ENCODE measurements at regions of chr1 and their contacts with region 1.

Region 1: DNA sequence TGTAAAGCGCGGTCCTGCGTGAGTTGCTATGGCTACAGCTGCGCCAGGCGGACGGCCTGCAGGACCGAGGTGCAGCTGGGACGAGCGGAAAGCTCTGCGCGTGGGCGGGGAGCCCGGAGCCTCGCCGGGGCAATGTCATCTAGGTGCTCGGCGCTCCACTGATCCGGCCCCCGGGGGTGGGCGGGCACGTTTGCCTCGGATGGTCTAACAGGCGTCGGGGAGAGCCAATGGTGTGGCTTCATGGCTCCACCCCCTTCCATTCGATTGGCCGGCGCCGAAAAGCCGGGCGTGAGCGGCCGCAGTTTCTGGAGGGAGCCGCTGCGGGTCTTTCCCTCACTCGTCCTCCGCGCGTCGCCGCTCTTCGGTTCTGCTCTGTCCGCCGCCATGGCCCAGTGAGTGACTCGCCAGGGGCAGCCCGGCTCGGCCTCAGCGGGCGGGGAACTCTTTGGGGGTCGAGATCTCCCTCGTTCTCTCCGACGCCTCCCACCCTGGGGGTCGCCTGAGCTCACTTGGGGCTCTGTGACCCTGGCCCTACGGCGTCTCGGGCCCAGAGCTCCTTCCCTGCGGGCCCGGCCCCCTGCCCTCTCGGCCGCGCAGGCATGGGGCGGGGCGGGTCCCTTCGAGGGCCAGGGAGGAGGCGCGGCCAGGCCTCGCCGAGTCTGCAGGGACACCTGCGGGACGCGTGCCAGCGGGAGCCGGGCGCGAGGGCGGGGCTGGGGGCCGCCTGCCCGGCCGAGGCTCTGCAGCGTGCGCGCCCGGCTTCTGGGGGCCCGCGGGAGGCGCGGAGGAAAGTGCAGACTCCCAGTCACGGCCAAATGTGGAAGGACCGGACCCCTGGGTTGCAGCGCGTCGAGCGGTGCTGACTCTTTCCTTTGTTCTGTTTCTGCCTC is at the start of gene PGD:
- DNase-seq: peak; percentile 87 to 98 (median 94)
- ATAC-seq: peak; percentile 99
- H3K4me3 ChIP-seq: peak within 1 kb of the TSS; percentile 95
- H3K4me3 Mint-ChIP-seq: peak within 1 kb of the TSS; percentile 87 to 97 (median 96)
- H3K27ac ChIP-seq: peak within 1 kb of the TSS; percentile 86
- H3K27ac Mint-ChIP-seq: peak within 1 kb of the TSS; percentile 63 to 94 (median 82)
- H3K4me1 ChIP-seq: peaks cover 4 to 7% of the 10 kb centered on the region in 2 donors
- H3K4me1 Mint-ChIP-seq: peaks cover 10 to 30% (median 25%) of the 10 kb centered on the region in 7 donors
- H3K27me3 ChIP-seq: no peaks in the 10 kb centered on the region
- H3K27me3 Mint-ChIP-seq: no peaks in the 10 kb centered on the region
- total RNA-seq, gene PGD: 42.0 to 110 (median 48.5) TPM

Region 2: GRCh38 chr1:9942939-9943788 is 455.8 kb before region 1 on chr1 and contains the starts of genes LZIC and NMNAT1:
- CTCF ChIA-PET with region 1: no interaction called
- POLR2A ChIA-PET with region 1: no interaction called
- intact Hi-C with region 1: loop called in 1 of 2 experiments (anchors 1 kb)
- DNase-seq: peak; percentile 71 to 92 (median 82)
- ATAC-seq: peak; percentile 98
- H3K4me3 ChIP-seq: peak within 1 kb of the TSS; percentile 71
- H3K4me3 Mint-ChIP-seq: peak within 1 kb of the TSS; percentile 91 to 98 (median 97)
- H3K27ac ChIP-seq: peak within 1 kb of the TSS; percentile 92
- H3K27ac Mint-ChIP-seq: peak within 1 kb of the TSS; percentile 93 to 99 (median 97)
- H3K4me1 ChIP-seq: peaks cover 0 to 9% of the 10 kb centered on the region in 2 donors
- H3K4me1 Mint-ChIP-seq: peaks cover 17 to 33% (median 26%) of the 10 kb centered on the region in 7 donors
- H3K27me3 ChIP-seq: no peaks in the 10 kb centered on the region
- H3K27me3 Mint-ChIP-seq: no peaks in the 10 kb centered on the region
- total RNA-seq, gene LZIC: 18.0 to 35.1 (median 31.0) TPM
- total RNA-seq, gene NMNAT1: 2.7 to 8.3 (median 7.5) TPM

Region 3: GRCh38 chr1:10209905-10210810 is 188.8 kb before region 1 on chr1 and contains the start of gene KIF1B:
- CTCF ChIA-PET with region 1: interaction called, 3 read pairs
- POLR2A ChIA-PET with region 1: interaction called, 3 read pairs
- intact Hi-C with region 1: loop called in 1 of 2 experiments (anchors 1 kb)
- DNase-seq: peak; percentile 93 to 98 (median 95)
- ATAC-seq: peak; percentile 99
- H3K4me3 ChIP-seq: peak within 1 kb of the TSS; percentile 94
- H3K4me3 Mint-ChIP-seq: peak within 1 kb of the TSS; percentile 83 to 93 (median 90)
- H3K27ac ChIP-seq: peak within 1 kb of the TSS; percentile 75
- H3K27ac Mint-ChIP-seq: peak within 1 kb of the TSS; percentile 51 to 82 (median 67)
- H3K4me1 ChIP-seq: peaks cover 5 to 15% of the 10 kb centered on the region in 2 donors
- H3K4me1 Mint-ChIP-seq: peaks cover 14 to 37% (median 21%) of the 10 kb centered on the region in 7 donors
- H3K27me3 ChIP-seq: peaks cover 0 to 4% of the 10 kb centered on the region in 2 donors
- H3K27me3 Mint-ChIP-seq: peaks cover 0 to 8% (median 0%) of the 10 kb centered on the region in 5 donors
- total RNA-seq, gene KIF1B: 10.4 to 21.6 (median 13.4) TPM

Region 4: DNA sequence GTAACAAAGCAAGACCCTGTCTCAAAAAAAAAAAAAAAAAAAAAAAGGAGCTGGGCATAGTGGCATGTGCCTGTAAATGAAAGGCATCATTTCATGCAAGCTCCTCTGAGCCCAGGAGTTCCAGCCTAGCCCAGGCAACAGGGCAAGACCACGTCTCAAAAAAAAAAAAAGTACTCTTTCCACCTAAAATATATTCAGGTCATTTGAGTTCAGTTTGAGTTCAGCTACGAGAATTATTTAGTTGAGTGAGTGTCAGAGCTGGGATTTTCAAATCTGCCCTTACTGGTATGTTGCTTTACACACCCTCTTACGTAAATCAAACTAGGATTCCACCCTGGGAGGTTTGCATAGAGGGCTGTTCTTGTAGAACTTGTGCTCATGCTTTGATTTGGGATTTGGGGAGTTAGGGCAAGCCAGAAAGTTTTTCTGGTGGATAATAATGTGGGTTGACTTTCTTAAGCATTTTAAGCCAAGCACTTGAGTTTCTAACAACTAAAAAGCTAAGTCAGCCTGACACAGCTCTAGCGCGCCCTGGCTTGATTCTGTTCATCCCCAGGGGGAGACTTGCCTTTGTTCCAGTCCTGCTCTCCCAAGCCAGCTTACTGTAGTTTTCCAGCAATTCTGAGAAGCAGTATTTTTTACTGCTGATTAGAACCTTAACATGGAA is 11.4 kb before region 1 on chr1:
- CTCF ChIA-PET with region 1: no interaction called
- POLR2A ChIA-PET with region 1: interaction called, 3 read pairs
- intact Hi-C with region 1: loop called (anchors 1 kb)
- DNase-seq: no peak
- ATAC-seq: no peak
- H3K4me3 ChIP-seq: no peak overlapping the region
- H3K4me3 Mint-ChIP-seq: no peak overlapping the region
- H3K27ac ChIP-seq: no peak overlapping the region
- H3K27ac Mint-ChIP-seq: no peak overlapping the region
- H3K4me1 ChIP-seq: no peaks in the 10 kb centered on the region
- H3K4me1 Mint-ChIP-seq: peaks cover 5 to 12% (median 10%) of the 10 kb centered on the region in 7 donors
- H3K27me3 ChIP-seq: no peaks in the 10 kb centered on the region
- H3K27me3 Mint-ChIP-seq: no peaks in the 10 kb centered on the region

Region 5: DNA sequence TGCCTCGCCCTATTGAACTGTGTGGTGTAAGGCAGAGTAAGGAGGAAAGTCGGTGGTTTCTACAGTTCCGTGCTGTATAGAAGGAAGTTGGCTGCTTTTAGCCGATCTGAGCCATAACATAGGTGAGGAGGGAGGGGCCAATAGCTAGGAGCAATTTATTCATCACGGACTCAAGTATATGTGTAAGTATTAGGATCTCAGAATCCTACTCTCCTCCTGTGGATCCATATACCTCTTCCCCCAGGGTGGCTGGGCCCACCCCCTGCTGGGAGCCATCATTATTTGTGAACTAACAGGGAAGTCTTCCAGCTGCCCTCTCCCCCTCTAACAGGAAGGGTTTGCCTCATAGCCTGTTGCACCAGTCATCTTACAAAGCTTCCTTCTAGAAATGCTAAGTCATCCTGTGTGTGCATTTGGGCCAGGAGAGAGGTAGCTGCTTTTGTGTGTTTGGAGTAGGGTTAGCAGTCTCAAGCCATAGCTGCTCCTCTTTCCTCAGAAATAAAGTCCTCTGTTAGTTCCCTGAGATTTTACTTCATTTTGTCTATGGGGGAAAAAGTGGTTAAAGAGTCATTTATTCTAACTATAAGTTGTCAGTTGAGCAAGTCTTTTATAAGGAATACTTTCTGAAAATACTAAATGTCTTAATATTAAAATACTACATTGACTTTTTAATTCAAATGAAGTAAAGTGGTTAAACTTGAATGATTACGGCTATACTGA is 16.4 kb after region 1 on chr1:
- CTCF ChIA-PET with region 1: no interaction called
- POLR2A ChIA-PET with region 1: no interaction called
- intact Hi-C with region 1: loop called in 1 of 2 experiments (anchors 2 kb)
- DNase-seq: no peak
- ATAC-seq: peak; percentile 91
- H3K4me3 ChIP-seq: no peak overlapping the region
- H3K4me3 Mint-ChIP-seq: peak overlapping the region in 2 of 10 donors; percentile 30 to 70
- H3K27ac ChIP-seq: no peak overlapping the region
- H3K27ac Mint-ChIP-seq: peak overlapping the region in 8 of 9 donors; percentile 51 to 88 (median 74)
- H3K4me1 ChIP-seq: no peaks in the 10 kb centered on the region
- H3K4me1 Mint-ChIP-seq: peaks cover 0 to 17% (median 7%) of the 10 kb centered on the region in 7 donors
- H3K27me3 ChIP-seq: no peaks in the 10 kb centered on the region
- H3K27me3 Mint-ChIP-seq: no peaks in the 10 kb centered on the region

Region 6: DNA sequence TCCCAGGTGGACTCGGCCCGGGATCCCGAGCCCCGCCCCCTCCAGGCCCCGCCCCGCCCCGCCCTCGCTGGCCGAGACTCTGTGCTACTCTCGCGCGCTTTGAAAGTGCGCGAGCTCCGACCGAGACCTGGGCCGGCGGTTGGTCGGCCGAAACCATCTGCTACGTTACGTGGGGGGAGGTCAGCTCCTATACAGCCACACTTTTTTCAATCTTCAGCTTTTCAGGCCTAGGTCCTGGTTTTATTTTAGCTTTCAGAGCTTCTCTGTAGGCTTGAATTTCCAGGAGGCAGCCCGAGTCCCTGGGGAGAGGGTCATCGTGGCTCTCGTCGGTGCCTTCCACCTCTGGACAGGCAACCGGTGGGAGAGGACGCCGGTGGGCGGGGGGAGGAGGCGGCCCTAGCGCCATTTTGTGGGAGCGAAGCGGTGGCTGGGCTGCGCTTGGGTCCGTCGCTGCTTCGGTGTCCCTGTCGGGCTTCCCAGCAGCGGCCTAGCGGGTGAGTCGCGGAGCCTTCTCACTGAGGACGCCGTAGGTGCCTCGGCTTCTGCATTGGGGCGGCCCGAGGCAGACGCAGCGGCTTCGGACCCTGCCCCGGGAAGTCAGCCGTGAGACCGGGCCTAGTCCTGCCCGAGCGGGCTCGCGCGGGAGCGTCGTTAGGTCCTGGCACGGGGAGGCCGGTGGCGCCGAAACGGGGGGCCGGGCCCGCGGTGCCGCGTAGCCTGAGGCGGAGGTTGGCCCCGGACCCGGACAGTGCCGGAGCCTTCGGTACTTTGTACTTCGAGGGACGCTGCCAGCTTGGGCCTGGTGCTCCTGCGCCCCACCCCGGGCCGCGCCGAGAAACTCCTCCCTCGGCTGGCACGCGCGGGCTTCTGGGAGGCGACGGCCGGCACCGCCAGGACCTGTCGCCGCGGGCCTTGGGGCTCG is 613.5 kb after region 1 on chr1 and contains the start of gene TARDBP:
- CTCF ChIA-PET with region 1: no interaction called
- POLR2A ChIA-PET with region 1: no interaction called
- intact Hi-C with region 1: loop called in 1 of 2 experiments (anchors 1 kb)
- DNase-seq: peak; percentile 88 to 95 (median 93)
- ATAC-seq: peak; percentile 95
- H3K4me3 ChIP-seq: peak within 1 kb of the TSS; percentile 74
- H3K4me3 Mint-ChIP-seq: peak within 1 kb of the TSS; percentile 86 to 96 (median 93)
- H3K27ac ChIP-seq: peak within 1 kb of the TSS; percentile 94
- H3K27ac Mint-ChIP-seq: peak within 1 kb of the TSS; percentile 95 to 98 (median 98)
- H3K4me1 ChIP-seq: peaks cover 19 to 24% of the 10 kb centered on the region in 2 donors
- H3K4me1 Mint-ChIP-seq: peaks cover 15 to 36% (median 26%) of the 10 kb centered on the region in 7 donors
- H3K27me3 ChIP-seq: no peaks in the 10 kb centered on the region
- H3K27me3 Mint-ChIP-seq: no peaks in the 10 kb centered on the region
- total RNA-seq, gene TARDBP: 114 to 196 (median 174) TPM